Left colon (tissue), 2 donors: ENCODE measurements at regions of chr16 and their contacts with region 1.

Region 1: DNA sequence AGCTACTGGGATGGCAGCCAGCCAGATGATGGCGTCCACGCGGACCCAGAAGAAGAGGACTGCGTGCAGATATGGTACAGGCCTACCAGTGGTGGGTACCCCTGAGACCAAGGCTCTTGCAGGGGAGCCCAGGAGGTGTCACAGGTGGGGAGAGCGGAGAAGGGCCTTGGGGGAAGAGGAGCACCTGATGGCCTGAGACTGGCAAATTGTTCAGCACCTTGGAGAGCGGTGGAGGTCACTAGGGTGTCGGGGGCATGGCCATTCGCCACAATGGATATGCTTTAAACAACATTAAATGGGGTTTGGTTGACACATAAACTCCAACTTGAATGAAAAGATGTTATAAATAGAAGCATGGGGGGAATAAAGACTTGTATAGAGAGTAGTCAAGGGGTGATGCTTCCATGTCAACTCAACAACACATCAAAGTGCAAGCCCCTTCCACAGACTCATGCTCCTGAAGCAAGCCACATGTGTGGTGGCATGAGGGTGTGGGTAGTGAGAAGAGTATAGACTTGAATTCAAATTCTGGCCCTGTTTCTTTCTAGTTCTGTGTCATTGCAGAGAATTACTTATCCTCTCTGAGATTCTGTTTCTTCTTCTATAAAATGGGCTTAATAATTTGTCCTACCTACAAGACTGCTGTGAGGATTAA is 22.2 kb downstream of the CLEC19A start:
- DNase-seq: no peak
- ATAC-seq: no peak

Region 2: GRCh38 chr16:19254611-19255010 is 53.1 kb before region 1 on chr16:
- intact Hi-C with region 1: loop called in 1 of 2 experiments (anchors 5 kb)
- DNase-seq: no peak
- ATAC-seq: no peak